Colonic mucosa (tissue), 4 donors: ENCODE measurements at regions of chr18 and their contacts with region 1.

Region 1: GRCh38 chr18:26090130-26091046 is at the start of gene SS18:
- DNase-seq: peak; percentile 95
- H3K4me3 ChIP-seq: peak within 1 kb of the TSS; percentile 73
- H3K27ac ChIP-seq: peak within 1 kb of the TSS; percentile 95
- H3K4me1 ChIP-seq: peaks cover 7% of the 10 kb centered on the region
- H3K27me3 ChIP-seq: no peaks in the 10 kb centered on the region
- CTCF ChIP-seq: no peak
- total RNA-seq, gene SS18: 41.9 to 43.9 TPM

Region 2: DNA sequence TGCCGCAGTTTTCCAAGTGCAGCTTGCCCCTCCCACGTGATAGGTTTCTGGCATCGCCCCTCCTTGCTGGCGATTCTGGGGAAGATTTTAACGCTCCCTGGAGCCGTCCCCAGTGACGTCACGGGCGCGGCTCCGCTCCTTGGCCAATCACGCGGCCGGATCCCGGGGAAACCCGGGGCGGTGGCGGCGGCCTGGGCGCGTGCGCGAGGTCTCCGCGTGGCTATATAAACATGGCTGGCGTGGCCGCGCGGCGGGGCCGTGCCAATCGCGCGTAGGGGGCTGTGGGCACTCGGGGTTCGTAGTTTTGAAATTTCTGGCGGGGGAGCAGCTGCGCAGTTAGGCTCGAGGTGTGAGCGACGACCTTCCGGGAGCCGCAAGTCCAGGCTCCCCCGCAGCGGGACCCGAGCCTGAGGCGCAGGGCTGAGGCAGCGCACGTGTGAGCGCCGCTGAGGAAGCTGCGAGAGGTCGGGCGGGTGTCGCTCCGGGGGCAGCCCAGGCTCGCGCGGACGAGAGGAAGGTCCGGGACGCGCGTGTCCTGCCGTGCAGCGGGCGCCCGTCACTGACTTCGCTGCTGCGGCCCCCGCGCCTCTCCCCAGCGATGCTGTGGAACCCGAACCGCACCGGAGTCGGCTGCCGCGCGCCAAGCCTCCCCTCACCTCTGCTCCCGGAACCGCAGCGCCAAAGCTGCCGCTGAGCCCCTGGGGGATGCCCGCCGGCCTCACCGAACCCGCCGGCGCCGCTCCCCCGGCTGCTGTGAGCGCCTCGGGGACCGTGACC is 136.0 kb after region 1 on chr18 and contains the start of gene TAF4B:
- intact Hi-C with region 1: loop called (anchors 10 kb)
- DNase-seq: peak; percentile 95
- H3K4me3 ChIP-seq: peak within 1 kb of the TSS; percentile 84
- H3K27ac ChIP-seq: peak within 1 kb of the TSS; percentile 51
- H3K4me1 ChIP-seq: no peaks in the 10 kb centered on the region
- H3K27me3 ChIP-seq: no peaks in the 10 kb centered on the region
- CTCF ChIP-seq: no peak
- total RNA-seq, gene TAF4B: 2.5 to 2.7 TPM